ENCODE measurements at regions of chr3 and their contacts with region 1.

Region 1: GRCh38 chr3:171566803-171567422 is 106.7 kb upstream of the TNIK start:
- DNase-seq: peak in 2 of 3 donors; percentile 42 to 44
- H3K4me3 ChIP-seq: no peak overlapping the region
- H3K4me3 Mint-ChIP-seq: no peak overlapping the region
- H3K27ac ChIP-seq: no peak overlapping the region
- H3K27ac Mint-ChIP-seq: no peak overlapping the region
- H3K4me1 ChIP-seq: peaks cover 25 to 29% of the 10 kb centered on the region in 2 donors
- H3K4me1 Mint-ChIP-seq: peaks cover 30% of the 10 kb centered on the region
- H3K27me3 ChIP-seq: no peaks in the 10 kb centered on the region
- H3K27me3 Mint-ChIP-seq: peaks cover 0 to 3% (median 0%) of the 10 kb centered on the region in 3 donors
- CTCF ChIP-seq: peak; percentile 90

Region 2: GRCh38 chr3:171162986-171163723 is 403.8 kb before region 1 on chr3:
- intact Hi-C with region 1: loop called in 1 of 2 experiments (anchors 5 kb)
- DNase-seq: peak; percentile 21 to 52 (median 39)
- H3K4me3 ChIP-seq: no peak overlapping the region
- H3K4me3 Mint-ChIP-seq: no peak overlapping the region
- H3K27ac ChIP-seq: no peak overlapping the region
- H3K27ac Mint-ChIP-seq: peak overlapping the region in 1 of 7 donors; percentile 13
- H3K4me1 ChIP-seq: no peaks in the 10 kb centered on the region
- H3K4me1 Mint-ChIP-seq: peaks cover 6% of the 10 kb centered on the region
- H3K27me3 ChIP-seq: no peaks in the 10 kb centered on the region
- H3K27me3 Mint-ChIP-seq: peaks cover 0 to 6% (median 2%) of the 10 kb centered on the region in 3 donors
- CTCF ChIP-seq: peak; percentile 83

Region 3: GRCh38 chr3:171187706-171188290 is 379.1 kb before region 1 on chr3:
- intact Hi-C with region 1: loop called in 1 of 2 experiments (anchors 5 kb)
- DNase-seq: peak; percentile 5 to 13 (median 12)
- H3K4me3 ChIP-seq: no peak overlapping the region
- H3K4me3 Mint-ChIP-seq: no peak overlapping the region
- H3K27ac ChIP-seq: no peak overlapping the region
- H3K27ac Mint-ChIP-seq: no peak overlapping the region
- H3K4me1 ChIP-seq: no peaks in the 10 kb centered on the region
- H3K4me1 Mint-ChIP-seq: peaks cover 10% of the 10 kb centered on the region
- H3K27me3 ChIP-seq: no peaks in the 10 kb centered on the region
- H3K27me3 Mint-ChIP-seq: no peaks in the 10 kb centered on the region
- CTCF ChIP-seq: peak; percentile 69

Region 4: DNA sequence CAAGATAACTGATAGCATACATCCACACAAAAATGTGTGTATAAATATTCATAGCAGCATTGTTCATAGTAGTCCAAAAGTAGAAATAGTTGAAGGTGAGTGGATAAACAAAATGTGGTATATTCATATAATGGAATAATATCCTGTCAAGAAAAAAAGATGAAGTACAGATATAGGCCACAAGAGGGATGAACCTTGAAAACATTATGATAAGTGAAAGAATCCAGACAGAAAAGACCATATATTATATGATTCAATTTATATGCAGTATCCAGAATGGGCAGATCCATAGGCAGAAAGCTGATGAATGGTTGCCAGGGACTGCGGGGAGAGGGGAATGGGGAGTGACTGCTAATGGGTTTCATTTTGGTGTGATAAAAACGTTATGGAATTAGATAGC is 52.4 kb before region 1 on chr3:
- intact Hi-C with region 1: no loop called
- DNase-seq: no peak
- H3K4me3 ChIP-seq: no peak overlapping the region
- H3K4me3 Mint-ChIP-seq: no peak overlapping the region
- H3K27ac ChIP-seq: no peak overlapping the region
- H3K27ac Mint-ChIP-seq: no peak overlapping the region
- H3K4me1 ChIP-seq: no peaks in the 10 kb centered on the region
- H3K4me1 Mint-ChIP-seq: no peaks in the 10 kb centered on the region
- H3K27me3 ChIP-seq: no peaks in the 10 kb centered on the region
- H3K27me3 Mint-ChIP-seq: peaks cover 0 to 2% (median 0%) of the 10 kb centered on the region in 3 donors
- CTCF ChIP-seq: peak; percentile 26